Caco-2 (cell line): ENCODE measurements at regions of chr18 and their contacts with region 1.

Region 1: DNA sequence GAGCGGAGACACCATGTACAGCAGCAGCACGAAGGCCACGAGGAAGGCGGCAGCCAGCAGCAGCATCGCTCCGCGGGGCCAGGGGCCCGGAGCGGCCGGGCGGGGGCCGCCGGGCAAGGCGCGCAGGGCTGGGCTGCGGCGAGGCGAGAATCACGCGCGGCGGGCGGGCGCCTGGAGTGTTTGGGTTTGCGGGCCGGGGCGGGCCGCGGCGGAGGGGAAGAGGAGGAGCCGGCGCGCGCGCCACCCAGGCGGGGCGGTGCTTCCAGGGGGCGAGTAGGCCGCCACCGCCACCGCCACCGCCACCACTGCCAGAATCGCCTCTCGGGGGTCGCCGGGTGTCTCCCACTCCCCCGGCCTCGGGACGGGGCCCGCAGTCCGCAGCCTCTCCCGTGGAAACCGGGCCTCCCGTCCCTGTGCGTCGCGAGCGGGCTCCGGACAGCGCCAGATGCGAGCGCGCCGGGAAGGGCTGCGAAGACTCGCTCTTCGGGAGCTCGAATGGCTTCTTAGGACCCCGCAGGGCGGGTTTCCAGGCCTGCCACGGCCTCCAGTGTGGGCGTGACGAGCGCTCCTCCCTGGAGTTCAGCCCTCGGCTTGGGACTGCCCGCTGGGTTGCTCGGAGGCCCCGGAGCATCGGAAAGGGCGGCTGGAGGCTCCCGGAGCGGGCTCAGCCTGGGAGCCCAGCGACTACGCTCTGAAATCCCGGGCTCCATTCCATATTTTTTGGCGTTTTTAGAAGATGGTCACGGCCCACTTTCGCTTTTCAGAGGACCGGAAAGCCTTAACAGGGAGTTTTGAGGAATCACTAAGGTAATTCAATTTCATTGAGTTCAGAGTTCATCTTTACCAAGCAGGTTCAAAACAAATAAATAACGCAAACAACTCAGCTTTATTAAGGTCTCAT is at the start of gene KDSR:
- DNase-seq: peak; percentile 93 to 94
- H3K4me3 ChIP-seq: peak within 1 kb of the TSS; percentile 46
- H3K4me3 Mint-ChIP-seq: peak within 1 kb of the TSS; percentile 94
- H3K27ac Mint-ChIP-seq: peak within 1 kb of the TSS; percentile 85
- H3K4me1 ChIP-seq: no peaks in the 10 kb centered on the region
- H3K4me1 Mint-ChIP-seq: no peaks in the 10 kb centered on the region
- H3K27me3 ChIP-seq: no peaks in the 10 kb centered on the region
- H3K27me3 Mint-ChIP-seq: no peaks in the 10 kb centered on the region
- CTCF ChIP-seq: no peak
- total RNA-seq, gene KDSR: 22.8 and 26.8 TPM in 2 replicates

Region 2: GRCh38 chr18:63422087-63422809 is 54.9 kb after region 1 on chr18 and contains the start of gene VPS4B:
- CTCF ChIA-PET with region 1: no interaction called
- POLR2A ChIA-PET with region 1: interaction called, 3 read pairs
- intact Hi-C with region 1: loop called (anchors 1 kb)
- DNase-seq: peak; percentile 94 to 97
- H3K4me3 ChIP-seq: peak within 1 kb of the TSS; percentile 75
- H3K4me3 Mint-ChIP-seq: peak within 1 kb of the TSS; percentile 79
- H3K27ac Mint-ChIP-seq: peak within 1 kb of the TSS; percentile 98
- H3K4me1 ChIP-seq: no peaks in the 10 kb centered on the region
- H3K4me1 Mint-ChIP-seq: peaks cover 9% of the 10 kb centered on the region
- H3K27me3 ChIP-seq: no peaks in the 10 kb centered on the region
- H3K27me3 Mint-ChIP-seq: no peaks in the 10 kb centered on the region
- CTCF ChIP-seq: no peak
- total RNA-seq, gene VPS4B: 35.0 and 35.3 TPM in 2 replicates